Heart right ventricle (tissue), 16 donors: ENCODE measurements at regions of chr5 and their contacts with region 1.

Region 1: GRCh38 chr5:131263648-131264450 is at the start of gene CDC42SE2:
- DNase-seq: peak; percentile 82 to 88
- ATAC-seq: peak; percentile 98 to 100 (median 99)
- H3K4me3 ChIP-seq: peak within 1 kb of the TSS; percentile 69 to 98 (median 94)
- H3K27ac ChIP-seq: peak within 1 kb of the TSS; percentile 21 to 98 (median 88)
- H3K4me1 ChIP-seq: peaks cover 0 to 60% (median 22%) of the 10 kb centered on the region in 9 donors
- H3K27me3 ChIP-seq: no peaks in the 10 kb centered on the region
- CTCF ChIP-seq: peak in 1 of 9 donors; percentile 3
- total RNA-seq, gene CDC42SE2: 9.3 to 25.8 (median 11.4) TPM

Region 2: DNA sequence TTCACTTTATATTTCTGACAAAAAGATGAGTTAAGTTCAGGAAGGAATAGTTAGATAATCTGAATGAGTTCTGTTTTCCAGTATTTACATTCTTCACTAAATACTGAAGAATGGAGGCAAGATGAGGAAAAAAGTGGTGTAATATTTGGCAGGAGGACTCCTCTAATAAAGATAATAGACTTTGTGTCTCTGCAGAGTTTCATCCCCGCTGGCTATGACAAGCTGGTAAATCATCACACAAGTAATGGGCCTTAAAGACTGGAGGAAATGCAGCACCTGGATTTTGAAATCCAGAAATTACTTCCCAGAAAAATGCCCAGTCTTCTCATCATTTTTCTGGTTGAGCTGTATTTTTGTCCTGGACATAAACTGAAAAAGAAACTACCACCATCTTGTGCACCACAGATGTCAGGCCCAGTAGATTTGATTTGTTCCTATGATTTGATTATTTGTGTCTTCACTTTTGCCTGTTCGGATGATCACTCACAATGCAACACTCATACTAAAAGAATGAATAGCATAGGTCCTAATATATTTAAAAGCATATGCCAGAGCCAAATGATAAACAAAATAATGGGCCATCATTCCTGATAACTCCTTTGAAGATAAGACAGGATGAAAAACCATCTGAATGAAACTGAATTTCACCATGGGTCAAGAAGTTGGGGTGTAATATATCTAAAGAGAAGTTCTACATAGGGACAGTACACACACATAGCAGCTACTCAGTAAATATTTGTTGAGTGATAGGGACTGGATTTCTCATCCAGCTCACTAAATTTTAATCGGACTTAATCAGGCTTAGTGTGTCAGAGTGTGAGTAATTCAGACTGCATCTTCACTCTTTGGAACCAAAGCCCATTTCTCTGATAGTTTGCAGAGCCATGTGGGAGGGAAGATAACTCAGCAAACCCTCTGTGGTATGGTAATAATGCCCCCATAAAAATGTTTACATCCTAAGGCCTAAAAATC is 299.3 kb before region 1 on chr5:
- intact Hi-C with region 1: no loop called
- DNase-seq: no peak
- ATAC-seq: no peak
- H3K4me3 ChIP-seq: no peak overlapping the region
- H3K27ac ChIP-seq: no peak overlapping the region
- H3K4me1 ChIP-seq: no peaks in the 10 kb centered on the region
- H3K27me3 ChIP-seq: no peaks in the 10 kb centered on the region
- CTCF ChIP-seq: no peak

Region 3: DNA sequence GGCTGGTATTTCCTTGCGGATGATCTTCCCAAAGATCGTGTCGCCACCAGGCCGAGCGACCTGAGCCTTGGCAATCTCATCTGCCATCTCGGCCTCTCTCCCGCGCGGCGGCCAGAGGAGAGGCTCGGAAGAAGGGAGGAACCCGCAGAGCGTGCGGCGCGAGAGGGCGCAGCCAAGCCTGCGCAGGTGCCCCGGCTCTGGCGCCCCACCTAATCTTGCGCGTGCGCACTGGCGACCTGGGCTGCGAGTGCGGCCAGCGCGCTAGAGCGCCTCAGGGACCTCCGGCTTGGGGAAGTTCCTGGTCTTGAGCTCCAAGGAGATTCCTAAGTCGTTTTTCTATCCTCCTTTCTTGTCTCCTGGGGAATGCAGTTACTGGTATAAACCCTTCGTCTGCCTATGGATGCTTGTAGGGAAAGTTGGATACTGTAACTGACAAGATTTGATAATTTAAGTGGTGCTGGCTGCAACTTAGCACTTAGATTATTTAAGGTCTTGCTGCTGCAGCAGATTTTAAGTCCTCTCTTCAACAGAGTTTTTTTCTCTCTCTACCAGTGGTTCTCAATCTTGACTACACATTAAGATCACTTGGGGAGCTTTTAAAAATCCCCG is 98.6 kb before region 1 on chr5 and contains the start of gene HINT1:
- intact Hi-C with region 1: loop called in 7 of 10 experiments (anchors 2 to 10 kb)
- DNase-seq: peak; percentile 89 to 94
- ATAC-seq: peak; percentile 95 to 99 (median 98)
- H3K4me3 ChIP-seq: peak within 1 kb of the TSS; percentile 73 to 95 (median 82)
- H3K27ac ChIP-seq: peak within 1 kb of the TSS; percentile 85 to 98 (median 92)
- H3K4me1 ChIP-seq: peaks cover 0 to 30% (median 21%) of the 10 kb centered on the region in 9 donors
- H3K27me3 ChIP-seq: no peaks in the 10 kb centered on the region
- CTCF ChIP-seq: peak in 3 of 9 donors; percentile 8 to 24 (median 15)
- total RNA-seq, gene HINT1: 113 to 190 (median 130) TPM

Region 4: GRCh38 chr5:131170540-131171275 is 93.1 kb before region 1 on chr5 and contains the start of gene LYRM7:
- intact Hi-C with region 1: loop called in 7 of 10 experiments (anchors 2 to 10 kb)
- DNase-seq: peak; percentile 89 to 98
- ATAC-seq: peak; percentile 99 to 100 (median 99)
- H3K4me3 ChIP-seq: peak within 1 kb of the TSS; percentile 39 to 81 (median 73)
- H3K27ac ChIP-seq: peak within 1 kb of the TSS in 9 of 10 donors; percentile 62 to 88 (median 82)
- H3K4me1 ChIP-seq: peaks cover 5 to 24% (median 20%) of the 10 kb centered on the region in 9 donors
- H3K27me3 ChIP-seq: no peaks in the 10 kb centered on the region
- CTCF ChIP-seq: peak in 1 of 9 donors; percentile 17
- total RNA-seq, gene LYRM7: 16.5 to 31.5 (median 24.5) TPM

Region 5: GRCh38 chr5:131305906-131306305 is 42.1 kb after region 1 on chr5:
- intact Hi-C with region 1: no loop called
- DNase-seq: no peak
- ATAC-seq: no peak
- H3K4me3 ChIP-seq: no peak overlapping the region
- H3K27ac ChIP-seq: no peak overlapping the region
- H3K4me1 ChIP-seq: peaks cover 0 to 35% (median 0%) of the 10 kb centered on the region in 9 donors
- H3K27me3 ChIP-seq: no peaks in the 10 kb centered on the region
- CTCF ChIP-seq: no peak

Region 6: GRCh38 chr5:131382407-131383395 is 118.9 kb after region 1 on chr5:
- intact Hi-C with region 1: loop called in 4 of 10 experiments (anchors 10 kb)
- DNase-seq: no peak
- ATAC-seq: peak in 7 of 8 donors; percentile 34 to 70 (median 49)
- H3K4me3 ChIP-seq: no peak overlapping the region
- H3K27ac ChIP-seq: peak overlapping the region in 1 of 10 donors; percentile 92
- H3K4me1 ChIP-seq: peaks cover 0 to 86% (median 12%) of the 10 kb centered on the region in 9 donors
- H3K27me3 ChIP-seq: no peaks in the 10 kb centered on the region
- CTCF ChIP-seq: peak in 6 of 9 donors; percentile 30 to 60 (median 42)

Region 7: DNA sequence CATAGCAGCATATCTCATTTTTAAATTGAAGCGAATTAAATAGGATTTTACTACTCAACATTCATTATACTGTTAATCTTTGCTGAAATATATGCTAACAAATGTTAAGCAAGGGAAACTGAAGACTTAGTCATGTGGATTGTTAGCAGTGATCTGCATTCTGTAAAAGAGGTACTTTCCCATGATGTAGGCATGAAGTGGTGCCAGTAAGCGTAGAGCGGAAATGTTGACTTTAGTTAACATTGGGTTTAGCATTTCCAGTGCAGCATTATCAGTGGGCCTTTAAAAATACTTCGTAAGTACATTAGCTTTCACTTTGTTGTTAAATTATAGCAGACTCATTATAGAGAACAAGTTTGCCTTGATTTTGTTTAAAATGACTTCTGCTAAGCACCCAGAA is 130.3 kb after region 1 on chr5:
- intact Hi-C with region 1: loop called in 3 of 10 experiments (anchors 10 kb)
- DNase-seq: no peak
- ATAC-seq: peak in 4 of 8 donors; percentile 38 to 63 (median 47)
- H3K4me3 ChIP-seq: no peak overlapping the region
- H3K27ac ChIP-seq: peak overlapping the region in 1 of 10 donors; percentile 52
- H3K4me1 ChIP-seq: peaks cover 0 to 15% (median 3%) of the 10 kb centered on the region in 9 donors
- H3K27me3 ChIP-seq: no peaks in the 10 kb centered on the region
- CTCF ChIP-seq: no peak

Region 8: GRCh38 chr5:131436081-131436480 is 172.2 kb after region 1 on chr5:
- intact Hi-C with region 1: no loop called
- DNase-seq: no peak
- ATAC-seq: peak in 1 of 8 donors; percentile 73
- H3K4me3 ChIP-seq: no peak overlapping the region
- H3K27ac ChIP-seq: no peak overlapping the region
- H3K4me1 ChIP-seq: peaks cover 0 to 13% (median 0%) of the 10 kb centered on the region in 9 donors
- H3K27me3 ChIP-seq: no peaks in the 10 kb centered on the region
- CTCF ChIP-seq: no peak

Region 9: GRCh38 chr5:131758520-131758900 is 494.7 kb after region 1 on chr5:
- intact Hi-C with region 1: no loop called
- DNase-seq: peak in 1 of 2 donors; percentile 13
- ATAC-seq: peak; percentile 75 to 93 (median 86)
- H3K4me3 ChIP-seq: no peak overlapping the region
- H3K27ac ChIP-seq: peak overlapping the region; percentile 11 to 81 (median 68)
- H3K4me1 ChIP-seq: peaks cover 0 to 80% (median 46%) of the 10 kb centered on the region in 9 donors
- H3K27me3 ChIP-seq: no peaks in the 10 kb centered on the region
- CTCF ChIP-seq: no peak